Activated T-helper 2 cell treated with anti-CD3 and anti-CD28 coated beads, Interferon-gamma antibody, Interleukin-2, Interleukin-4, amounts not matched to agents 10 μg/mL and 5 μg/mL and 100 μg/mL, durations not matched to agents 14 hours and 24 hours and 36 hours (primary cell): ENCODE measurements at regions of chr13 and their contacts with region 1.

Region 1: DNA sequence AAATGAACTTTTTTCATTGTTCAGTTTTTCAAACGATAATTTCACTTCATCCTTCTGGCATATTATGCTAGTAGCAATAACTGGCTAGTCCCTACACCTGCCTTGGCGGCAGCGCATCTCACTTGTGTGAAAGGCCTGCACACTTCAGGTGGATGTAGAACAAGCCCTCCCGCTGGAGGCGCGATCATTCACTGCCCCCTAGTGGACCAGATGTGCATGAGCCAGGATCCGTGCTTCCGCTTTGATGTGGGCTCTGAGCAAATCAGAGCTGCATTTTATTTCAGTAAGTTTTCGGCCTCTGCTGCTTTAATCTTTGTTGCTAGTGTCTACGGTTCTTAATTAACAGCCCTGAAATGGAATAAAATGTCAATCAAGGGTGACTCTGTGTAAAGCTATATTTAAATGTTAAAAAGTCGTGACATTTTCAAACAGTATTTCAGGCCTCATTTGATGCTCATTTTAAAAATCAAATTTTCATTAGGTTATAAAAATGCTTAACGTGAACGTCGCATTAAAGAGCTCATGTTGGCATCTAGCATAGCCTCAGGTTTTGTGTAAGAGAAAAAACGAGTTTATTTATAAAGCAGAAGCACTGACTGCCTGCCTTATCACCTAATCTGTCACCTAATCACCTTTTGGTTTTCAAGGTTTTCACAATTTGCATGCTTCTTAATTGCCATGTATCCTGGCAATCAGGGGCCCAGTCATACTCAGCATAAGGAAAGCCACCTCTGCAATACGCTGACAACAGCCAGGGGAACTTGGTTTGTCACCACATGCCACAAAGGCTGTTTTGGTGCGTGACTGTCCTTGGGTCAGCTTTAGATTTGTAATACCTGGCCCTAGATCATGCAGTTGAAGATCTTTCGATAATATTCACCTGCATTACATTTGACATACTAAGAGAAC is 112.2 kb downstream of the TEX26 start:
- DNase-seq: peak; percentile 78
- H3K4me3 Mint-ChIP-seq: peak overlapping the region; percentile 7
- H3K27ac Mint-ChIP-seq: peak overlapping the region; percentile 86
- H3K4me1 Mint-ChIP-seq: peaks cover 45% of the 10 kb centered on the region
- H3K27me3 Mint-ChIP-seq: no peaks in the 10 kb centered on the region

Region 2: GRCh38 chr13:30142486-30143211 is 902.0 kb before region 1 on chr13:
- intact Hi-C with region 1: loop called (anchors 10 kb)
- DNase-seq: no peak
- H3K4me3 Mint-ChIP-seq: no peak overlapping the region
- H3K27ac Mint-ChIP-seq: peak overlapping the region; percentile 79
- H3K4me1 Mint-ChIP-seq: peaks cover 49% of the 10 kb centered on the region
- H3K27me3 Mint-ChIP-seq: peaks cover 3% of the 10 kb centered on the region

Region 3: GRCh38 chr13:30617315-30618185 is 427.1 kb before region 1 on chr13 and contains the start of gene USPL1:
- intact Hi-C with region 1: loop called (anchors 10 kb)
- DNase-seq: peak; percentile 99
- H3K4me3 Mint-ChIP-seq: no peak within 1 kb of the TSS
- H3K27ac Mint-ChIP-seq: no peak within 1 kb of the TSS
- H3K4me1 Mint-ChIP-seq: peaks cover 26% of the 10 kb centered on the region
- H3K27me3 Mint-ChIP-seq: no peaks in the 10 kb centered on the region
- total RNA-seq, gene USPL1: 14.0 and 14.3 TPM in 2 replicates

Region 4: DNA sequence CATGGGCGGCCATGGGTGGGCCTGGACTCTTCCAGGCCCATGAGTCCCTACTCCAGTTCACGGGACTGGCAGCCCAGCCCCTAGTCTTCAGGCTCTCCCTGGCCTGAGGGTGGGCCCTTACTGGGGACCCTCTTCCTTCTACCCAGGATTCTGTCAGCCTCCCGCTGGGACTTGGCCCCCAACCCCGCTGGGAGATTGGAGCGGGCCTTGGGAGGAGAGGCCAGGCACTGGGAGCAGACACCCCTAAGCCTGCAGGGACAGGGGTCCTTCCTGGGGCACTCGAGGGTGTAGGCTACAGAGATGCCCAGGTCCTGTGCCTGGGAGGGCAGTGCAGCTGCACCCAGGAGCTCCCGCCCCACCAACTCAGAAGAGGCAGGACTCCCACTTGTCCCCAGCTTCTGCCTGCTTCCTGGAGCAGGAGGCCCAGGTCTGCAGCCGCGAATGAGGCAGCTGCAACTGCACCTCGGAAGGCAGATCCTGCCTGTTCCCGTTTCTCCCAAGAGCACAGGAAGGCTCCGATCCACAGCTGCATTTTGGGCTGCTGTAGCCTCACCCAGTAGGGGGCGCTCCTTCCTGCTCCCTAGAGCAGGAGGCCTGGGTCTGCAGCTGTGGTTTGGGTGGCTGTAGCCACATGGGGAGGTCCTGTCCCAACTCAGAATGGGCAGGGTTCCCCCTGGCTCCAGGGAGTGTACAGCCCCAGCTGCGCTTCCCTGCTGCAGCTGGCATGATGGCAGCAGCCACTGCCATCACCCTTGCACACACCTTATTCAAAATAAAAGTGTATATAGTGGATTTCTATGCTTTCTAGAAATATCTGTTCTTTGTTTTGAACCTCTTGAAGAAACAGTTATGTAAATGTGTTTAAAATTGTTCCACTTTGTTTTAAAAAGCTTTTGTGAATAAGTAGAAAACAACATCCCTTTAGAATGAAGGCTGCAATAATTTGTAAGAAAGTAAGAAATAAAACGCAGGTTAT is 65.4 kb before region 1 on chr13:
- intact Hi-C with region 1: loop called (anchors 1 kb)
- DNase-seq: peak; percentile 31
- H3K4me3 Mint-ChIP-seq: no peak overlapping the region
- H3K27ac Mint-ChIP-seq: no peak overlapping the region
- H3K4me1 Mint-ChIP-seq: peaks cover 9% of the 10 kb centered on the region
- H3K27me3 Mint-ChIP-seq: peaks cover 19% of the 10 kb centered on the region

Region 5: DNA sequence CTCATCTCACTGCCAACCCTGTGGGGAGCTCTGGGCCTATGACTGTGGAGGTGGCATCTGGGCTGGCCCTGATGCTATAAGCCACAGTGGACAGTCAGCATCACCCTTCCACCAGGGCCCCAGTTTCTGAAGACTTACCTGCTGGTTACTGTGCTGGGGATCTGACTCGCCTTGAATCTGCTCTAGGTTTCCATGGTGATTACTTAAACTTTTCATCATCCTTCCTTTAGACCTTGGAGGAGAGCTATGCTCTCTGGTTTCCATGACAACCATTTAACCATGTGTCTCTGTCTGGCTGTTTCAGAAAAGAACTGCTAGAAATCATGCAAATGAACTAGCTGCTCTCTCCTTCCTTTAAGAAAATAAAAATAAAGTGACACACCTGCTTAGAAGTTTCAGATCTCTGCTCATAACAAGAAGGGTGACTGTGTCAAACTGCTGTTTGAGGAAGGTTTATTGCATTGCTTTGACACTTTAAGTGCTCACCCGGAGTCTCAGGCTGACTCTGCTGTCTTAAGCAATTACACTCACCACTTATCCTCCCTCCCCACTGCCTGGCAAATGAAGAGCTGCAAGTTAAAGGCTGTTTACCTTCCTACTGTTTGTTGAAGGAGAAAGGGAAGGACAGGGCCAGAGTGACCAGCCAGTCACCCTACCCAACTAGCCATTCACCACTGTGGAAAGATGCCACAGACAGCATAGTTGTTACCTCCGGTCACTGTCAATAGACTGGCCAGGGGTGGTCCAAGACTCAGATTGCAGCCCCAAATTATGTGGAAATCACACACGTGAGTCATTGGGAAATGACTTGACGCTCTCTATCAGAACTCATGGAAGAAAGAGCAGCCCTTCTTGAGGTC is 29.5 kb after region 1 on chr13:
- intact Hi-C with region 1: loop called (anchors 2 kb)
- DNase-seq: peak; percentile 13
- H3K4me3 Mint-ChIP-seq: no peak overlapping the region
- H3K27ac Mint-ChIP-seq: peak overlapping the region; percentile 11
- H3K4me1 Mint-ChIP-seq: peaks cover 8% of the 10 kb centered on the region
- H3K27me3 Mint-ChIP-seq: no peaks in the 10 kb centered on the region

Region 6: DNA sequence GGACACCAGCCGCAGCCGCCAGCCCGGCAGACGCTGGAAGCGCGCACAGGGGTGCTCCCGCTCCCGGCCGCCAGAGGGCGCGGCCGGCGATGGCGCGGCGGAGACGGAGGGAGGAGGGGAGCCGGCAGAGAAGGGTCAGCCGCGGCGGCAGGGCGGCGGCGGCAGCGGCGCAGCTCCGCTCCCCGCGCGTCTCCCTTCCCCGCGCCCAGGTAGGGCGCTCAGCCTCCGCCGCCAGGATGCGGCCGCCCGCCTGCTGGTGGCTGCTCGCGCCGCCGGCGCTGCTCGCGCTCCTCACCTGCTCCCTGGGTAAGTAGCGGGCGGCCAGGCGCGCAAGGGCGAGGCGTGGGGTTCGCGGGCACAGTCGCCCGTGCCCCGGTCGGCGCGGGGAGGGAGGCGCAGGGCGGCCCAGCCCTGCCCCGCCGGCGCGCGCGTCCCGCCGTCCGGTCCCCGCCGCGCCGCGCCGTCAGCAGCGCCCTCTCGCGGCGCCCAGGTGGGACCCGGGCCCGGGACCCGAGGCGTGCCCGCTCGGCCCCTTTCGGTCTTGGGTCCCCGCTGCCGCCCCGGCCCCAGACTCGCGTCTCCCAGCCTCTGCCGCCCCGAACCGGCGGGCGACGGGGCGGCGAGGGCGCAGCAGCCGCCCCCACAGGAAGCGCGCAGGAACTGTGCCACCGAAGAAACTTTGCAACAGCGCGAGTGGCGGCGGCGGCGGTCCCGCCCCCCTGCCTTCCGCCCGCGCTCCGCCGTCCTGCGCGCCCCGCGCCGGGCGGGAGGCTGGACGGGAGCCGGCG is 155.4 kb after region 1 on chr13 and contains the start of gene B3GLCT:
- intact Hi-C with region 1: loop called (anchors 2 kb)
- DNase-seq: peak; percentile 77
- H3K4me3 Mint-ChIP-seq: peak within 1 kb of the TSS; percentile 81
- H3K27ac Mint-ChIP-seq: peak within 1 kb of the TSS; percentile 75
- H3K4me1 Mint-ChIP-seq: peaks cover 35% of the 10 kb centered on the region
- H3K27me3 Mint-ChIP-seq: peaks cover 21% of the 10 kb centered on the region
- total RNA-seq, gene B3GLCT: 4.3 and 4.7 TPM in 2 replicates

Region 7: GRCh38 chr13:31625115-31625514 is 580.5 kb after region 1 on chr13:
- intact Hi-C with region 1: no loop called
- DNase-seq: no peak
- H3K4me3 Mint-ChIP-seq: no peak overlapping the region
- H3K27ac Mint-ChIP-seq: no peak overlapping the region
- H3K4me1 Mint-ChIP-seq: no peaks in the 10 kb centered on the region
- H3K27me3 Mint-ChIP-seq: no peaks in the 10 kb centered on the region